IMR-90 (cell line): ENCODE measurements at regions of chr4 and their contacts with region 1.

Region 1: DNA sequence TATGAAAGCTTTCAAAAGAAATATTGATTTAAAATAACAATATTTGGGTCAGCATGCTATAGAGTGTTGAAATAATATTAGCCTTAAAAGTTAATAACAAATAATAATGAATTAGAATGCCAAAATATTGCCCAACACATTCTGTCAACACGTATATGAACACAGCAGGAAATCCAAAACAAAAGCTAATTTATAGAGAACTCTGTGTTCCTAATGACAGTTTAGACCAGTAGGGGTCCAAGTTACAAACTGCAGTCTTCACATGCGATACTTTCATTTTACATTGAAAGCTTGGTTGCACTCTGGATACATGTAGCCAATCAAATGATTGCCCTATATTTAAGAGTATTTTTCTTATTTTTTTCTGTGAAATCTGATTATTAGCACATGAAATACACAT is 274.4 kb downstream of the DCTD start:
- DNase-seq: peak; percentile 66
- ATAC-seq: peak; percentile 49; the same call in 1 of the 2 replicates
- H3K4me3 ChIP-seq: no peak overlapping the region
- H3K27ac ChIP-seq: no peak overlapping the region
- H3K4me1 ChIP-seq: peaks cover 4% of the 10 kb centered on the region
- H3K27me3 ChIP-seq: no peaks in the 10 kb centered on the region
- CTCF ChIP-seq: 0 out of 2 replicates have a peak, but pooled peaks have one; percentile 22
- POLR2A ChIP-seq: no peak
- RAD21 ChIP-seq: 0 out of 2 replicates have a peak, but pooled peaks have one; percentile 18

Region 2: DNA sequence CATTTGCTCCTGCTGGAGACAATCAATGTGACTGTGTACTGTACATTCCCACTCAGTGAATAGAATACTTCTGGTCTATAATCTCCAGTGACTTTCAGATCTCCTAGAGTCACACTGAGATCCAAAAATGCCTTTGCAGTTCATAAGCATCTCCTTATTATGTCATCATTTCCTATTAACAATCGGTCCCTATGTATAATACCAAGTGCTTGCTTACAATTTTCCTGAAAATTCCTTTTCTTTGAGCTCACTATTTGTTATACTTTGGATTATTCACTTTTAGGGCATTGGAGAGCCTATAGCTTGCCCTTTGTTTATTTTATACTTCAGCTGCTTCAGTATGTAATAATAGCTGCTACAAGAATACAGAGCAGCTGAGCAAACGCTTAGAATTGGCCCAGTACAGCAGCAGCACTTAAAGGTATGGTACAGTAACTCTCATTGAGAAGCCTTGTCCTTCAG is 38.6 kb before region 1 on chr4:
- CTCF ChIA-PET with region 1: no interaction called
- POLR2A ChIA-PET with region 1: no interaction called
- dilution Hi-C with region 1: no loop called
- in situ Hi-C with region 1: no loop called
- intact Hi-C with region 1: loop called (anchors 2 kb)
- DNase-seq: peak; percentile 97
- ATAC-seq: peak; percentile 95
- H3K4me3 ChIP-seq: no peak overlapping the region
- H3K27ac ChIP-seq: no peak overlapping the region
- H3K4me1 ChIP-seq: peaks cover 2% of the 10 kb centered on the region; the same call in 1 of the 2 replicates
- H3K27me3 ChIP-seq: no peaks in the 10 kb centered on the region
- CTCF ChIP-seq: no peak
- POLR2A ChIP-seq: peak; percentile 14; the same call in 1 of the 2 replicates
- RAD21 ChIP-seq: no peak